ENCODE measurements at regions of chr5 and their contacts with region 1.

Region 1: DNA sequence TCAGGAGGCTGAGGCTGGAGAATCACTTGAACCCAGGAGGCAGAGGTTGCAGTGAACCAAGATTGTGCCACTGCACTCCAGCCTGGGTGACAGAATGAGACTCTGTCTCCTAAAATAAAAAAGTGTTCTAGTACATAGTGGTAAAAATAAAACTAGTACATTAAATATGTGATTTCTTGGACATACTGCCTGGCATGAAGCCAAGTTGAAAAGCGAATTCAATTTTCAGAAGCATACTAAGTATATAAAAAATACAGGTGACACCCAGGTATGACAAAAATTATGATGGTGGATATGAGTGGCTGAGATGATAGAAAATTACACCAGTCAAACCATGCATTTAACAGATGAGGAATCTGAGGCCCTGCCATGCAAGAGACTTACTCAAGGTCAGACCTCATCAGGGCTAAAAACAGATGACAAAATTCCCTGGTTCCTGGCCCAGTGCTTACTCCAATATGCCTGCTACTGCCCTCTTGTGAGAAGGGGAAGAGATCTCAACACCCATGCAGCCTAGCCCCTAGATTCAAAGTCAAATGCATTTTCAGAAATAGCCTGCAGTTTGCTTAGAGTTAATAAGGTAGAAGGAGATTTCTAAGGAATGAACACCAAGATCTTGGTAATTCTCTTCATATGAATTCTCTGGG is 46.6 kb upstream of the GNPDA1 start:
- DNase-seq: peak; percentile 53
- H3K4me3 Mint-ChIP-seq: no peak overlapping the region
- H3K27ac Mint-ChIP-seq: no peak overlapping the region
- H3K4me1 Mint-ChIP-seq: peaks cover 24% of the 10 kb centered on the region
- H3K27me3 Mint-ChIP-seq: no peaks in the 10 kb centered on the region
- CTCF ChIP-seq: no peak

Region 2: DNA sequence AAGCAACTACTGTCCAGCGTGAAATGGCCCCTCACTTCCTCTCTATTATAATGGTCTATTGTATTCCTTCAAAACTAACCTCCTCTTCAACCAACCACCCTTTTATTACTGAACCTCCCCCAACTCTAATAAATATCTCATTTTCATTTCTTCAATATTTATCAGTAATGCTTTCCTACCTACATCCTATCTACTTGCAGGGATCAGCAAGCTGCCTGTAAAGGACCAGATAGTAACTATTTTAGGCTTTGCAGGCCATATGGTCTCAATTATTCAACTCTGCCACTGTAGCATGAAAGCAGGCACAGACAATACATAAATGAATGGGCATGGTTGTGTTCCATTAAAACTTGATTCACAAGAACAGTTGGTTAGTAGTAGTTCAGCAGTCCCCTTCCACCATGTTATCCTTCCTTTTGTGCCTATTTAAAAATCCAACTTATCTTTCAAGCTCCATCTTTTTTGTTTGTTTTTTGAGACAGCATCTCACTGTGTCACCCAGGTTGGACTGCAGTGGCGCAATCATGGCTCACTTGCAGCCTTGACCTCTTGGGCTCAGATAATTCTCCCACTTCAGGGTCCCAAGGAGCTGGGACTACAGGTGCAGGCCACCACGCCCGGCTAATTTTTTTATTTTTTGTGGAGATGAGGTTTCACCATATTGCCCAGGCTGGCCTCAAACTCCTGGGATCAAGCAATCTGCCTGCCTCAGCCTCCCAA is 524.8 kb before region 1 on chr5:
- CTCF ChIA-PET with region 1: no interaction called
- POLR2A ChIA-PET with region 1: no interaction called
- intact Hi-C with region 1: no loop called
- DNase-seq: no peak
- H3K4me3 Mint-ChIP-seq: no peak overlapping the region
- H3K27ac Mint-ChIP-seq: peak overlapping the region; percentile 20
- H3K4me1 Mint-ChIP-seq: no peaks in the 10 kb centered on the region
- H3K27me3 Mint-ChIP-seq: no peaks in the 10 kb centered on the region
- CTCF ChIP-seq: no peak

Region 3: GRCh38 chr5:141811287-141812155 is 247.9 kb before region 1 on chr5:
- CTCF ChIA-PET with region 1: no interaction called
- POLR2A ChIA-PET with region 1: no interaction called
- intact Hi-C with region 1: no loop called
- DNase-seq: peak; percentile 32
- H3K4me3 Mint-ChIP-seq: no peak overlapping the region
- H3K27ac Mint-ChIP-seq: no peak overlapping the region
- H3K4me1 Mint-ChIP-seq: no peaks in the 10 kb centered on the region
- H3K27me3 Mint-ChIP-seq: peaks cover 31% of the 10 kb centered on the region
- CTCF ChIP-seq: peak; percentile 74

Region 4: DNA sequence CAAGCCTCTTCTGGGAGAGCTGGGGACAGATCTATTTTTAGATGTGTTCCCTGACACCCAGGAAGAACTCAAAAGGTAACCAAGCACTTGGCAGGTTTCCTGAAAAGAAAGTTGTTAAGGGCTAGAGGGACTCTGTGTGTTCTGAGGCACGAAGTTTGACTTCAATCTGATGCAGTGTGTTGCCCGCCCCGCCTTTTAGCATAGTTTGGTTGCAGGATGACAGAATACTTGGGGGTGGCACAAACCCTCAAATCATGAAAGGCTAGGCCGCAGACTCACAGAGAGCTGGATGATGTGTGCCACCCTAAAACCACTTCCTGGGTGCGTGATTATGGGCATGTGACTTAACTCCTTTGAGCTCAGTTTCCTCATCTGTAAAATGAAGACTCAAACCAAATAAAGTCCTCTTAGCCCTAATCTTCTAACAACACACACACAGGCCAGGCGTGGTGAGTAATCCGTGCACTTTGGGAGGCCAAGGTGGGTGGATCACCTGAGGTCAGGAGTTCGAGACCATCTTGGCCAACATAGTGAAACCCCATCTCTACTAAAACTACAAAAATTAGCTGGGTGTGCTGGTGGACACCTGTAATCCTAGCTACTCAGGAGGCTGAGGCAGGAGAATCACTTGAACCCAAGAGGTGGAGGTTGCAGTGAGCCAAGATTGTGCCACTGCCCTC is 36.4 kb after region 1 on chr5:
- CTCF ChIA-PET with region 1: no interaction called
- POLR2A ChIA-PET with region 1: interaction called, 19 read pairs
- intact Hi-C with region 1: no loop called
- DNase-seq: no peak
- H3K4me3 Mint-ChIP-seq: no peak overlapping the region
- H3K27ac Mint-ChIP-seq: no peak overlapping the region
- H3K4me1 Mint-ChIP-seq: peaks cover 20% of the 10 kb centered on the region
- H3K27me3 Mint-ChIP-seq: no peaks in the 10 kb centered on the region
- CTCF ChIP-seq: no peak

Region 5: GRCh38 chr5:143771189-143771588 is 1711.8 kb after region 1 on chr5:
- CTCF ChIA-PET with region 1: no interaction called
- POLR2A ChIA-PET with region 1: no interaction called
- intact Hi-C with region 1: no loop called
- DNase-seq: no peak
- H3K4me3 Mint-ChIP-seq: no peak overlapping the region
- H3K27ac Mint-ChIP-seq: no peak overlapping the region
- H3K4me1 Mint-ChIP-seq: no peaks in the 10 kb centered on the region
- H3K27me3 Mint-ChIP-seq: no peaks in the 10 kb centered on the region
- CTCF ChIP-seq: no peak